ENCODE measurements at regions of chr3 and their contacts with region 1.

Region 1: DNA sequence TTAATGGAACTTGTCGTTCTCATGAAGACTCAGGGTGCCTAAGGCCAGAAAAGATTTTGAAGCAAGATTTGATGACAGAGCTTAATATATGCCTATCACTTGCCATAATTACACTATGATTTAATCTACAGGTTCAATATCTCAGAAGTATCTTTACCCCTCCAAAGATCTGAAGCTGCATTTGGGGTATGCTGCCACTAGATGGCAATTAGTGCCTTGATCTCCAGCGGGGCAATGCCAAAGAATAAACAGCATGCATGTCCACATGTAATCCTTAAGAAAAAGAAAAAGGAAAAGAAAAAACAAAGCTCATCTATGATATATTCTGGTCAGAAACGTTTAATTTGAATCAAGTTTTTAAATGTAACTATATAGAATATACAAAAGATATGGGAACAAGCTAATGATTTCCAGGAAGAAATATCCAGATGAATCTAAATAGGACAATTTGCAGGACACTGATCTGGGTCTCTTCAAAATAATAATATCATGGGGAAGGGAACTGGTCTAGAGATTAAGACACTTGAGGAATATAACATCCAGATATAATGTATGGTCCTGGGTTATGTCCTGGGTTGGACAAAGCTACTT is 55.0 kb upstream of the SOX14 start:
- DNase-seq: peak in 1 of 2 experiments; percentile 9
- H3K4me3 ChIP-seq: no peak overlapping the region
- H3K4me3 Mint-ChIP-seq: no peak overlapping the region
- H3K27ac Mint-ChIP-seq: no peak overlapping the region
- H3K4me1 ChIP-seq: no peaks in the 10 kb centered on the region
- H3K4me1 Mint-ChIP-seq: no peaks in the 10 kb centered on the region
- H3K27me3 ChIP-seq: no peaks in the 10 kb centered on the region
- H3K27me3 Mint-ChIP-seq: peaks cover 14% of the 10 kb centered on the region
- CTCF ChIP-seq: peak; percentile 42 to 58

Region 2: DNA sequence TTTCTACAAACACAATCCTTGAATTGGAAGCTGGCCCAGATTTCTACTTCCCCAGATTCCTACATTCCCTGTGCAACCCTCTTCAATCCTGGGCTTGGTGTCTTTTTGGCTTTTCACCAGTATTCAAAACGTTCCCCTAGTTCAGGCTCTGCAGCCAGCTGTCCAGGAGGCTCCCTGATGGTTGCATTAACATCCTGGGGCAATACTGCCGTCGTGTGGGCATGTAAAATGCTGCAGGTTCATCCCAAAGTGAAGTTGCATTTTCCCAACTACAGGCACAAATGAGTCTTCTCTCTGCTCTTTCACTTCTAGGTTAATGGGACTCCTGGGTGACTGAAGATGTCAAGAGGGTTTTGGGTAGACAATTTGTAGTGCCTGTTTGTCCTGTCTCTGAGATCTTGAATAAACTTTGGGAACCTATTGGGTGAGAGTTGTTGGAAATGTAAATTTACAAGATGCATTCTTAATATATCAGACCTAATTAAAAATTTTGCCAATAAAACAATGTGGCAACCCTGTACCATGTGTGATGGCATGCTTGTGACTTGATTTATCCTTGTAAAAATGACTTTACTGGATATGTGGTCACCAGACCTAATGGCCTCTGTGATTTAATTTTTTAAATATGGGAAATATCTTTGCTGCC is 83.6 kb after region 1 on chr3:
- CTCF ChIA-PET with region 1: interaction called, 5 read pairs
- POLR2A ChIA-PET with region 1: no interaction called
- intact Hi-C with region 1: loop called (anchors 1 kb)
- DNase-seq: peak; percentile 46 to 49
- H3K4me3 ChIP-seq: no peak overlapping the region
- H3K4me3 Mint-ChIP-seq: no peak overlapping the region
- H3K27ac Mint-ChIP-seq: no peak overlapping the region
- H3K4me1 ChIP-seq: no peaks in the 10 kb centered on the region
- H3K4me1 Mint-ChIP-seq: no peaks in the 10 kb centered on the region
- H3K27me3 ChIP-seq: no peaks in the 10 kb centered on the region
- H3K27me3 Mint-ChIP-seq: no peaks in the 10 kb centered on the region
- CTCF ChIP-seq: peak; percentile 41 to 58

Region 3: GRCh38 chr3:138051946-138052802 is 343.1 kb after region 1 on chr3:
- CTCF ChIA-PET with region 1: no interaction called
- POLR2A ChIA-PET with region 1: no interaction called
- intact Hi-C with region 1: loop called (anchors 5 kb)
- DNase-seq: peak in 1 of 2 experiments; percentile 64
- H3K4me3 ChIP-seq: no peak overlapping the region
- H3K4me3 Mint-ChIP-seq: no peak overlapping the region
- H3K27ac Mint-ChIP-seq: no peak overlapping the region
- H3K4me1 ChIP-seq: no peaks in the 10 kb centered on the region
- H3K4me1 Mint-ChIP-seq: no peaks in the 10 kb centered on the region
- H3K27me3 ChIP-seq: no peaks in the 10 kb centered on the region
- H3K27me3 Mint-ChIP-seq: peaks cover 2% of the 10 kb centered on the region
- CTCF ChIP-seq: peak; percentile 63 to 82